ENCODE measurements at regions of chr19 and their contacts with region 1.

Region 1: DNA sequence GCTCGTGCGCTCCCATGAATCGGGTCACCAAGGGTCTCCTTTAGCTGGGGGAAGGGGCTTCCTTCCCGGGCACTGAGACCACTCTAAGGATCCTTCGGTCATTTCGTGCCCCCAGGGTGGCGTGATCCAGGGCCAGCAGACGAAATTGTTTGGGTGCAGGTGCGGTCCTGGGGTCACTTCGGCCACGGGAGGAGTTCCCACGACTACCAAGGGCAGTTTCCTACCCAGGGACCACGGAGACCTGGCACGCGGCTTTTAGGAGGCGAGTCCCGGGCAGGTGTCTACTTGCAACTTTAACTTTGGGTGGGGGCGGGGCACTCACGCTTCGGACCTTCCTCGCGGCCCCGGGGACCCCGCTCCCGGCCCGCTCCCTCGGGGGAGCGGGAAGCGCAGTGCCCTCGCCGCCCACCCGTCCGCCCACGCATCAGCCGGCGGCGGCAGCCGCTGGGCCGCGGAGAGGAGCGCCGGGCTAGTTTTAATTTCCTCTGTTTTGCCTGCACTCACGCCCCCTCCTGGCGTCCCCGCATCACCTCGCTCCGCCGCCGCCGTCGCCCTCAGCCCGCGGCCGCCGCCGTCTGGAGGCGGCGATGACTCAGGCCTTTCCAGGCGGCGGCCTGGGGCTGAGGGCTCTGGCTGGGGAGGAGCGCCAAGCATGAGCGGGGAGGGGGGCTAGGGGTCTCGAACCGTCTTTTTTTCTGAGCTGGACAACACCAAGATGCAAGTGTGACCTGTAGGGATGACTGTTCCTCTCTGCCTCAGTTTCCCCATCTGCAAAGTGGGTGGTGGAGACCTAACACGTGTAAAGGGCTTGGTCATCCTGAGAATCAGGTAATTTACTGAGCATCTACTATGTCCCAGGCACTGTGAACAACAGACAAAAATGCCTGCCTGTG is 21.8 kb downstream of the OLFM2 start:
- DNase-seq: peak; percentile 53
- ATAC-seq: peak; percentile 87
- H3K4me3 ChIP-seq: peak overlapping the region; percentile 50 to 58
- H3K27ac ChIP-seq: peak overlapping the region; percentile 69
- H3K4me1 ChIP-seq: peaks cover 8 to 20% of the 10 kb centered on the region in 2 experiments; a peak in 3 of 4 replicates
- H3K27me3 ChIP-seq: no peaks in the 10 kb centered on the region
- CTCF ChIP-seq: peak; percentile 57 to 86 (median 63)
- POLR2A ChIP-seq: no peak
- RAD21 ChIP-seq: peak; percentile 67

Region 2: DNA sequence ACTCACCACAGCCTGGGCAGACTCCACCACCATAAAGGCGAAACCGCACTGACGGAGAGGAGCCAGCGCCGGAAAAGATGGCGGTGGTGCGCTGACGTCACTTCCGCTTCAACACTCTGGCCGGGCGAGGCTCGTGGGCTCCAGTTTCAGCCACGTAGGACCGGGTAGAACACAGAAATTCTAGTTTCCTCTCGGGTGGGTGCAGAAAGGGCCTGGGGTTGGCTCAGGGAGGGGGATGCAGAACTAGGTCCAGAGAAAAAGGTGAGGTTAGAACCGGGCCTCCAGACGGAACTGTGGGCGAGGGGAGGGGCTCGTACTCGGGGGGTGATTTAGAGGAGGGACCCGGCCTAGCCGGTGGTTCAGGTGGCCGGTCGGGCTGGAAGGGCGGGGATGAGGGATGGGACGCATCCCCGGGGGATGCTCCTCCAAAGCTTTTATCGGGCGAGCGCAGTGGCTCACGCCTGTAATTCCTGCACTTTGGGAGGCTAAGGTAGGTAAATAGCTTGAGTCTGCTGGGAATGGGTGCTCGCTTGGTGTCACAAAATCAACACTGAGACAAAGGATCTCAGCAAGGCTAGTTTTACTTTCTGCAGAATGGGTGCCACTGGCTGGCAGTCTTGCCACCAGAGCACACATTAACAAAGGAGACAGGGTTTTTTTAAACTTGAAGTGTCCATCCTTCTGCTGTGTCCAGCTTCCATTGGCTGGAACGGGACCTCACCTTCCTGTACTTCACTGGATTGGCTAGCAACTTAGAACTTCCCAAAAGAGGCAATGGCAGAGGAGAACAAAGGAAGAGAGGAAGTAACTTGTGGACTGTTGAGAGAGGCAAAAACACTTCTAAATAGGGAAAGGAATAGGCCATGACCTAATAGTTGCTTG is 293.2 kb before region 1 on chr19 and contains the start of gene ZNF561:
- CTCF ChIA-PET with region 1: no interaction called
- POLR2A ChIA-PET with region 1: no interaction called
- RAD21 ChIA-PET with region 1: no interaction called
- intact Hi-C with region 1: loop called (anchors 10 kb)
- DNase-seq: peak; percentile 81
- ATAC-seq: peak; percentile 86
- H3K4me3 ChIP-seq: peak within 1 kb of the TSS; percentile 92 to 97
- H3K27ac ChIP-seq: peak within 1 kb of the TSS; percentile 81
- H3K4me1 ChIP-seq: peaks cover 3 to 13% of the 10 kb centered on the region in 2 experiments; a peak in 3 of 4 replicates
- H3K27me3 ChIP-seq: no peaks in the 10 kb centered on the region
- CTCF ChIP-seq: no peak
- POLR2A ChIP-seq: peak; percentile 65
- RAD21 ChIP-seq: no peak; the same call in 1 of the 2 replicates
- total RNA-seq, gene ZNF561: 31.3 TPM

Region 3: DNA sequence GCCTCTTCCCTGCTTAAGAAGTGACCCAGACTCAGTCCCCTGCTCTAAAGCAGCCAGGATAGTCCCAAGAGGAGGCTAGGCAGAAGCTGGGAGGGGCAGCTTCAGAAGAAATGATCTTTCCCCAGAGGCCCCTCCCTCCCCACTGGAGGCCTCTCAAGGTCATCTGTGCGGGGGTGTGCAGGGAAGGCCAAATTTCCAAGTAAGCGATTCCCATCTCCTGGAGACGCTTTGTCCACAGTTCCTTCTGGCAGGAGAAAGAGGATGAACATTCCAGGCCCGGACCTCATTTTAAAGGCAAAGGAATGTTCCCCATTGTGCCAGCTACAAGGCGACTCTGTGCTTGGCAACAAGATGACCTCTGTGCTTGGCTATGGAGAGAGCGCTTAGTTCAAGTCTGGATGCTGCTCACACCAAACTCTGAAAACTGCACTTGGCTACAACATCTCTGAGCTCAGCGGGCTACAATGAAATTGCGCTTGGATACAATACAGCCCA is 72.3 kb after region 1 on chr19:
- CTCF ChIA-PET with region 1: no interaction called
- POLR2A ChIA-PET with region 1: no interaction called
- RAD21 ChIA-PET with region 1: no interaction called
- intact Hi-C with region 1: no loop called
- DNase-seq: no peak
- ATAC-seq: no peak
- H3K4me3 ChIP-seq: no peak overlapping the region
- H3K27ac ChIP-seq: no peak overlapping the region
- H3K4me1 ChIP-seq: peaks cover 0 to 4% of the 10 kb centered on the region in 2 experiments; a peak in 1 of 4 replicates
- H3K27me3 ChIP-seq: no peaks in the 10 kb centered on the region
- CTCF ChIP-seq: no peak
- POLR2A ChIP-seq: no peak
- RAD21 ChIP-seq: no peak